A549 (cell line): ENCODE measurements at regions of chr6 and their contacts with region 1.

Region 1: GRCh38 chr6:165850434-165851019 is 187.5 kb upstream of the PDE10A start:
- DNase-seq: peak; percentile 53 to 59
- ATAC-seq: peak in 1 of 2 experiments; percentile 72; a peak in 4 of 6 replicates
- H3K4me3 ChIP-seq: no peak overlapping the region
- H3K27ac ChIP-seq: no peak overlapping the region
- H3K4me1 ChIP-seq: peaks cover 22% of the 10 kb centered on the region
- CTCF ChIP-seq: peak; percentile 78
- EP300 ChIP-seq: no peak
- POLR2A ChIP-seq: no peak
- RAD21 ChIP-seq: peak; percentile 64 to 75; a peak in 4 of 5 replicates

Region 2: GRCh38 chr6:165439928-165440554 is 410.5 kb before region 1 on chr6:
- CTCF ChIA-PET with region 1: interaction called, 12 read pairs
- POLR2A ChIA-PET with region 1: no interaction called
- DNase-seq: peak; percentile 6 to 69
- ATAC-seq: peak in 1 of 2 experiments; percentile 74; a peak in 3 of 6 replicates
- H3K4me3 ChIP-seq: no peak overlapping the region
- H3K27ac ChIP-seq: 0 out of 6 replicates have a peak overlapping the region, but pooled peaks of 1 of the 2 experiments have one; percentile 48
- H3K4me1 ChIP-seq: peaks cover 24% of the 10 kb centered on the region; the same call in 2 of the 3 replicates
- CTCF ChIP-seq: peak; percentile 57
- EP300 ChIP-seq: no peak
- POLR2A ChIP-seq: no peak
- RAD21 ChIP-seq: peak; percentile 74 to 77

Region 3: GRCh38 chr6:165835410-165835851 is 15.1 kb before region 1 on chr6:
- CTCF ChIA-PET with region 1: interaction called, 10 read pairs
- POLR2A ChIA-PET with region 1: no interaction called
- DNase-seq: no peak
- ATAC-seq: peak; percentile 14 to 43; a peak in 3 of 6 replicates
- H3K4me3 ChIP-seq: no peak overlapping the region
- H3K27ac ChIP-seq: no peak overlapping the region
- H3K4me1 ChIP-seq: peaks cover 31% of the 10 kb centered on the region
- CTCF ChIP-seq: no peak
- EP300 ChIP-seq: no peak
- POLR2A ChIP-seq: no peak
- RAD21 ChIP-seq: no peak

Region 4: DNA sequence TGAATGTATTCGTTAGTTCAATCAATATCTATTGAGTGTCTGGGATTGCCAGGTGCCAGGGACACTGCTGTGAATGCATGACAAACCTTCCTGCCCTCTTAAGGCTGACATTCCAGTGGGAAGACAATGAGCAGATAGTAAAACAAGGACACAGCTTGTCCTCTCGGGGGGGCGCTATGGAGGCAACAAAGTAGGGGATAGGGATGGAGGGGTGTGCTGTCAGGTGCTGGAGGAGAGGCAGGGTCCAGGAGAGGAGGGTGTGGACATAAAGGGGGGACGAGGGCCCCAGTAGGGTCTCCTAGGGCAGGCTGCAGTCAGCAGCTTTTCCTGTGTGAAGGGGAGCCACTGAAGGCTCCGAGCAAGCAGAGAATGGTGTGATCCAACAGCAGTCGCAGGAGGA is 10.7 kb after region 1 on chr6:
- CTCF ChIA-PET with region 1: interaction called, 12 read pairs
- POLR2A ChIA-PET with region 1: no interaction called
- DNase-seq: no peak
- ATAC-seq: no peak; a peak in 1 of 6 replicates
- H3K4me3 ChIP-seq: no peak overlapping the region
- H3K27ac ChIP-seq: no peak overlapping the region
- H3K4me1 ChIP-seq: peaks cover 43% of the 10 kb centered on the region
- CTCF ChIP-seq: no peak
- EP300 ChIP-seq: no peak
- POLR2A ChIP-seq: no peak
- RAD21 ChIP-seq: no peak